ENCODE measurements at regions of chr2 and their contacts with region 1.

Region 1: GRCh38 chr2:2590841-2591541 is 259.9 kb upstream of the MYT1L start:
- DNase-seq: no peak
- H3K4me3 ChIP-seq: no peak overlapping the region
- H3K27ac ChIP-seq: no peak overlapping the region
- H3K4me1 ChIP-seq: no peaks in the 10 kb centered on the region
- H3K27me3 ChIP-seq: no peaks in the 10 kb centered on the region
- CTCF ChIP-seq: no peak
- POLR2A ChIP-seq: no peak

Region 2: GRCh38 chr2:1665745-1666505 is 925.1 kb before region 1 on chr2:
- CTCF ChIA-PET with region 1: no interaction called
- POLR2A ChIA-PET with region 1: no interaction called
- dilution Hi-C with region 1: no loop called
- intact Hi-C with region 1: loop called (anchors 10 kb)
- DNase-seq: no peak
- H3K4me3 ChIP-seq: no peak overlapping the region
- H3K27ac ChIP-seq: no peak overlapping the region
- H3K4me1 ChIP-seq: no peaks in the 10 kb centered on the region
- H3K27me3 ChIP-seq: no peaks in the 10 kb centered on the region
- CTCF ChIP-seq: no peak
- POLR2A ChIP-seq: no peak

Region 3: GRCh38 chr2:2564300-2565078 is 26.5 kb before region 1 on chr2:
- CTCF ChIA-PET with region 1: no interaction called
- POLR2A ChIA-PET with region 1: no interaction called
- dilution Hi-C with region 1: no loop called
- intact Hi-C with region 1: no loop called
- DNase-seq: no peak
- H3K4me3 ChIP-seq: no peak overlapping the region
- H3K27ac ChIP-seq: no peak overlapping the region
- H3K4me1 ChIP-seq: no peaks in the 10 kb centered on the region
- H3K27me3 ChIP-seq: no peaks in the 10 kb centered on the region
- CTCF ChIP-seq: no peak
- POLR2A ChIP-seq: no peak